ENCODE measurements at regions of chr20 and their contacts with region 1.

Region 1: DNA sequence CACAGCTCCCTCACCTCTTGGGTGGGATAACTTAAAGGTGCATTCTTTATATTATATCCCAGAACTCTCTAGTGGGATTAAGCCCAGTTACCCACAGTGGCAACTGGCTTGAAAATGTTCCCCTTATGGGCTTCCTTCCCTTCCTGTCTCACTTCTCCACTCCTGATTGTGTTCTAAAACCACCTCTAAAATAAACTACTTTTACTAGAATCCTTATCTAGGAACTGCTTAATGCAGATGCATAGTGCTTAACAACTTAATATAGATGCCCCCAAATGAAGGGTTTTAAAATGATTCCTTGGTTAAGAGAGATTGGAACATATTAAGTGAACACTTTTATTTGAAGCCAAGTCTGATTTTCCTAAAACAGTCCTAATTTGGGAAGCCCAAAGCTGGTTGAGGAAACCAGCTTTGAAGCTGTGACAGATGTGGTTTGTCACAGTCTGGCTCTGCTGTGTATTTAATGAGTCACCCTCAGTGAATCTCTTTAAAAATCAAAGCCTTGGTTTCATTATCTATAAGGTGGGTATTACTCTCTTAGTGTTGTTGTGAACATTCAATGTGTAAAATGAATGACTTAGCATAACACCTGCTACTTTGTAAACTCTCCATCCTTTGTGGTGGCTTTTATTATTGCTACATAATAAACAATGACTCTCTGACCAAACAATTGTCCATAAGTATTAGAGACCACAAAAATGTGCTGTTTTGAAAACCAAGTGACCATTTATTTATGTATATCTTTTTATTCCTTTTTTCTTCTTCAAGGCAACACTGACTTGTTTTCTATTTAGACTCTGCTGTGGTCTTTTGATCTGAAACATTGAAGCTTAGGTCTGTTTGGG is 24.4 kb downstream of the PLCB1 start:
- DNase-seq: peak; percentile 29
- H3K4me3 Mint-ChIP-seq: no peak overlapping the region
- H3K27ac Mint-ChIP-seq: no peak overlapping the region
- H3K4me1 Mint-ChIP-seq: peaks cover 41% of the 10 kb centered on the region
- H3K27me3 Mint-ChIP-seq: peaks cover 9% of the 10 kb centered on the region

Region 2: GRCh38 chr20:7828437-7828836 is 328.0 kb before region 1 on chr20:
- CTCF ChIA-PET with region 1: no interaction called
- intact Hi-C with region 1: no loop called
- DNase-seq: no peak
- H3K4me3 Mint-ChIP-seq: no peak overlapping the region
- H3K27ac Mint-ChIP-seq: no peak overlapping the region
- H3K4me1 Mint-ChIP-seq: no peaks in the 10 kb centered on the region
- H3K27me3 Mint-ChIP-seq: no peaks in the 10 kb centered on the region

Region 3: GRCh38 chr20:8073116-8073832 is 83.2 kb before region 1 on chr20:
- CTCF ChIA-PET with region 1: no interaction called
- intact Hi-C with region 1: loop called (anchors 2 kb)
- DNase-seq: peak; percentile 18
- H3K4me3 Mint-ChIP-seq: no peak overlapping the region
- H3K27ac Mint-ChIP-seq: peak overlapping the region; percentile 78
- H3K4me1 Mint-ChIP-seq: peaks cover 8% of the 10 kb centered on the region
- H3K27me3 Mint-ChIP-seq: no peaks in the 10 kb centered on the region

Region 4: GRCh38 chr20:8212286-8212685 is 55.8 kb after region 1 on chr20:
- CTCF ChIA-PET with region 1: no interaction called
- intact Hi-C with region 1: loop called (anchors 1 kb)
- DNase-seq: no peak
- H3K4me3 Mint-ChIP-seq: no peak overlapping the region
- H3K27ac Mint-ChIP-seq: no peak overlapping the region
- H3K4me1 Mint-ChIP-seq: peaks cover 26% of the 10 kb centered on the region
- H3K27me3 Mint-ChIP-seq: peaks cover 1% of the 10 kb centered on the region